PC-9 (cell line): ENCODE measurements at regions of chrX and their contacts with region 1.

Region 1: DNA sequence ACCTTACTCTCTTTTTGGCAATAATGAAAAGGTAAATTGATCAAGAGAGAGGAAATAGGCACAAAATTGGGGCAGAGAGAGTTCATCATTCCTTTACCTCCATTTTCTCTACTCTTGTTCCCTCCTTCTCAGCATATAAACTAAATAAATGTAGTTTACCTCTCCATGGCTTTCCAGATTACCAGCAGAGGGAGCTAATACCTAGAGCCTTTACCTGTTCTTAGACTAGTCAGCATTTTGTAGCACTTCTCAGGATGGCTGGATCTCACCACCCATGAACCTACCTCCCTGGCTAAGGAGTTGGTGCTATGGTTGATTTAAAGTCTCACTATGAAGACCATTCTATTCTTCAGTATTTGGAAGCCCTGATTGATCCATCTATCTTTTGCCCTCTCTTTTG is 15.7 kb downstream of the OFD1 start:
- DNase-seq: peak in 1 of 2 experiments; percentile 44
- H3K4me3 ChIP-seq: no peak overlapping the region
- H3K27ac ChIP-seq: no peak overlapping the region
- H3K4me1 ChIP-seq: no peaks in the 10 kb centered on the region
- H3K27me3 ChIP-seq: no peaks in the 10 kb centered on the region
- CTCF ChIP-seq: peak; percentile 68

Region 2: GRCh38 chrX:13658602-13659001 is 91.6 kb before region 1 on chrX:
- CTCF ChIA-PET with region 1: no interaction called
- POLR2A ChIA-PET with region 1: no interaction called
- intact Hi-C with region 1: loop called (anchors 1 kb)
- DNase-seq: peak in 1 of 2 experiments; percentile 52
- H3K4me3 ChIP-seq: peak overlapping the region; percentile 42; the same call in 1 of the 2 replicates
- H3K27ac ChIP-seq: peak overlapping the region; percentile 91
- H3K4me1 ChIP-seq: peaks cover 24% of the 10 kb centered on the region
- H3K27me3 ChIP-seq: no peaks in the 10 kb centered on the region
- CTCF ChIP-seq: peak; percentile 84

Region 3: DNA sequence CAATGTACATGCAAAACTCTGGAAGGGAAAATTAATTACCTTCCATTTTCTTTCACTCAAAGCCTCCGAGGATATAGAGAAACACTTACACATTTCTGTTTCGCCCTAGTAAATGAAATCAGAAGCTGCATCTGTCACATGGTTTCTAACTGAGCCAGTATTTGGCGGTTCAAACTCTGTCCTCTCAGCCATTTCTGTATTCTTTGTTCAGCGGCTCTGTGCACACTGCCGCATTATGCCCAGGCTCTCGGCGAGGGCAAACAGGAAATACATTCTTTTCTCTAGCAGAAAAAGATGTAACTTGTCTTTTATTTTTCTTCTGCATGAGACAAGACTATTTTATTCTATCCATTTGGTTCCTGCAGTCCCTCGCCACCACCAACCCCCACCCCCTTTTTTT is 138.1 kb after region 1 on chrX:
- CTCF ChIA-PET with region 1: no interaction called
- POLR2A ChIA-PET with region 1: no interaction called
- intact Hi-C with region 1: no loop called
- DNase-seq: no peak
- H3K4me3 ChIP-seq: no peak overlapping the region
- H3K27ac ChIP-seq: no peak overlapping the region
- H3K4me1 ChIP-seq: no peaks in the 10 kb centered on the region
- H3K27me3 ChIP-seq: no peaks in the 10 kb centered on the region
- CTCF ChIP-seq: no peak